Left ventricle myocardium inferior (tissue), 1 donor: ENCODE measurements at regions of chr15 and their contacts with region 1.

Region 1: GRCh38 chr15:63891079-63891767 is 57.5 kb upstream of the HERC1 start:
- DNase-seq: peak; percentile 81
- H3K4me3 ChIP-seq: no peak overlapping the region
- H3K27ac ChIP-seq: peak overlapping the region; percentile 34
- H3K4me1 ChIP-seq: peaks cover 23% of the 10 kb centered on the region
- H3K27me3 ChIP-seq: no peaks in the 10 kb centered on the region
- CTCF ChIP-seq: peak; percentile 86

Region 2: GRCh38 chr15:63672775-63673174 is 218.4 kb before region 1 on chr15:
- intact Hi-C with region 1: loop called (anchors 5 kb)
- DNase-seq: no peak
- H3K4me3 ChIP-seq: no peak overlapping the region
- H3K27ac ChIP-seq: no peak overlapping the region
- H3K4me1 ChIP-seq: no peaks in the 10 kb centered on the region
- H3K27me3 ChIP-seq: no peaks in the 10 kb centered on the region
- CTCF ChIP-seq: no peak

Region 3: GRCh38 chr15:63752075-63752684 is 139.0 kb before region 1 on chr15:
- intact Hi-C with region 1: loop called (anchors 5 kb)
- DNase-seq: no peak
- H3K4me3 ChIP-seq: no peak overlapping the region
- H3K27ac ChIP-seq: no peak overlapping the region
- H3K4me1 ChIP-seq: peaks cover 5% of the 10 kb centered on the region
- H3K27me3 ChIP-seq: no peaks in the 10 kb centered on the region
- CTCF ChIP-seq: peak; percentile 82

Region 4: DNA sequence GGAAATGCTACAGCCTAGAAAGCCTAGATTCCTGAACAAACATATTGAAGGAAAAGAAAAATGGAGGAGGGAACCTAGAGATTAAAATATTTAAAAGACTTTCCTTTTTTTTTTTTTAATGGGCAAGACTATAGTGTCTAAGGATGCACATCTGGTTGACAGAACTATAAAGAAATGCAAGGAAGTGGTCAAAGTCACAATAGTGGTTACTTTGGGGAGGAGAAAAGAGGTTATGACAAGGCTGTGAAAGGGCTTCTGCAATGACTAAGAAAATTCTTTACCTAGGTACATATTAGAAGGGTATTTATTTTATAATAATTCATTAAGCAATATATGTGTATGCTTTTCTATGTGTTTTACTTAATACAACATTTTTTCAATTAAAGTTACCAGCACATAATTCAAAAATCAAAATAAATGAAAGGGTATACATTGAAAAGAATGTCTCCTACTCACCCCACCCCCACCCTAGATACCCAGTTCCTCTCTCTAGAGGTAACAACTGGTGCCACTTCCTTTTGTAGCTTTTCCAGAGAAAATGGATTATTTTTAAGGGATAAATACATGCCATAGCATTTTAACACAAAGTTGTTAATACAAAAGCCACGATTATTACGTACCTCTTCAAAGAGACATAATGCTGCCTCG is 127.6 kb before region 1 on chr15:
- intact Hi-C with region 1: no loop called
- DNase-seq: no peak
- H3K4me3 ChIP-seq: no peak overlapping the region
- H3K27ac ChIP-seq: no peak overlapping the region
- H3K4me1 ChIP-seq: peaks cover 73% of the 10 kb centered on the region
- H3K27me3 ChIP-seq: no peaks in the 10 kb centered on the region
- CTCF ChIP-seq: no peak